Lower leg skin (tissue), 4 donors: ENCODE measurements at regions of chr1 and their contacts with region 1.

Region 1: GRCh38 chr1:154479764-154480421 is 22.1 kb upstream of the TDRD10 start:
- DNase-seq: peak; percentile 79 to 87
- H3K4me3 ChIP-seq: no peak overlapping the region
- CTCF ChIP-seq: peak in 1 of 3 donors; percentile 97
- POLR2A ChIP-seq: no peak

Region 2: GRCh38 chr1:153749408-153750005 is 730.4 kb before region 1 on chr1:
- intact Hi-C with region 1: no loop called
- DNase-seq: peak; percentile 93 to 97
- H3K4me3 ChIP-seq: no peak overlapping the region
- CTCF ChIP-seq: peak in 1 of 3 donors; percentile 74
- POLR2A ChIP-seq: no peak

Region 3: DNA sequence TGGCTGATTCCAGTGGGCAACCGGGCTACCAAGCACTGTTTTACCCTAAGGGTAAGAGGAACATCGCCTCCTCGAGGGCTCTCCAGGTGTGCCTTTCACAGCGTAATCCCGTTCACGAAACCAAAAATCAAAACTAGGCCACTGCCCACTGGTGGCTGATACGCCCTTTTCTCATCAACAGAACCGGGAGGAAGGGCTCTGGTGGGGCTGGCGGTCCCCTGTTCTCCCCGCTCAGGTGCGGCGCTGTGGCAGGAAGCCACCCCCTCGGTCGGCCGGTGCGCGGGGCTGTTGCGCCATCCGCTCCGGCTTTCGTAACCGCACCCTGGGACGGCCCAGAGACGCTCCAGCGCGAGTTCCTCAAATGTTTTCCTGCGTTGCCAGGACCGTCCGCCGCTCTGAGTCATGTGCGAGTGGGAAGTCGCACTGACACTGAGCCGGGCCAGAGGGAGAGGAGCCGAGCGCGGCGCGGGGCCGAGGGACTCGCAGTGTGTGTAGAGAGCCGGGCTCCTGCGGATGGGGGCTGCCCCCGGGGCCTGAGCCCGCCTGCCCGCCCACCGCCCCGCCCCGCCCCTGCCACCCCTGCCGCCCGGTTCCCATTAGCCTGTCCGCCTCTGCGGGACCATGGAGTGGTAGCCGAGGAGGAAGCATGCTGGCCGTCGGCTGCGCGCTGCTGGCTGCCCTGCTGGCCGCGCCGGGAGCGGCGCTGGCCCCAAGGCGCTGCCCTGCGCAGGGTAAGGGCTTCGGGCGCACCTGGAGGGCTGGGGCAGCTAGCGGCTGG is 74.7 kb before region 1 on chr1 and contains the start of gene IL6R:
- intact Hi-C with region 1: loop called (anchors 10 kb)
- DNase-seq: peak; percentile 93 to 99
- H3K4me3 ChIP-seq: peak within 1 kb of the TSS; percentile 64
- CTCF ChIP-seq: no peak
- POLR2A ChIP-seq: peak in 1 of 2 donors; percentile 67
- total RNA-seq, gene IL6R: 14.7 to 42.1 (median 21.8) TPM

Region 4: DNA sequence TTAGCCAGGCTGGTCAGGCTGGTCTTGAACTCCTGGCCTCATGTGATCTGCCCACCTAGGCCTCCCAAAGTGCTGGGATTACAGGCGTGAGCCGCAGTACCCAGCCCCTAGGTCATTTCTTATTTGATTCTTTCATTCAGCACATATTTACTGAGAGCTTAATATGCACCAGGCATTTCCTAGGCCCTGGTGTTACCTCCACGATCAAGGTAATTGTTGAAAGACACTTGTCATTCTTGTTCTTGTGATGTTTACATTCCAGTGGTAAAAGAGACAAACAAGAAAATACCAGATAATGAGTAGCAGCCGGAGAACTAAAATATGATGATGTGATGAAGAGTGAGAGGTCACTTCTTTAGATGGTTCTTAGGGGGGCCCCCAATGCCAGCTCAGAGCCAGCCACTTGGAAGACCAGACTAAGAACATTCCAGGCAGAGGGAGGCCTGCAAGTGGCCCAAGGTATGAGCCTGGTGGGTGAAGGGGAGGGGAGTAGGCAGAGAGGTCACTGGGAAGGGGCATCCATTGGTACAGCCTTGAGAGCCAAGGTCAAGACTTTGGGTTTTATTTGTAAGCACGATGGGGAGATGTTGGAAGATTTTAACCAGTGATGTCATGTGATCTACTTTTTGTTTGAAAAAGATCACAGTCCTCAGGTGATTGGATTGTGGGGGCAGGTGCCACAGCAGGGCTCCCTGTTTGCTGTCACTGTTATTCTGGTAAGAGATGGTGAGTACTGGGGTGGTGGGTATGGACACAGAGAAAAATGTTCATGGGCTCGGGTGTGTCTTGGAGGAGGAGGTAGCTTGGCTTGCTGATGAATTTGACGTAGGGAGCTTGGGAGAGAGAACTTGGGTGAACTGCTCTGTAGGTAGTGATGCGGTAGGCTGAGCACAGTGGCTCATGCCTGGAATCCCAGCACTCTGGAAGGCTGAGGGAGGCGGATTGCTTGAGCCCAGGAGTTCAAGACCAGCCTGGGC is 59.9 kb after region 1 on chr1:
- intact Hi-C with region 1: loop called (anchors 5 kb)
- DNase-seq: no peak
- H3K4me3 ChIP-seq: no peak overlapping the region
- CTCF ChIP-seq: no peak
- POLR2A ChIP-seq: no peak